Activated CD4-positive, alpha-beta memory T cell treated with anti-CD3 and anti-CD28 coated beads for 36 hours (primary cell): ENCODE measurements at regions of chr5 and their contacts with region 1.

Region 1: DNA sequence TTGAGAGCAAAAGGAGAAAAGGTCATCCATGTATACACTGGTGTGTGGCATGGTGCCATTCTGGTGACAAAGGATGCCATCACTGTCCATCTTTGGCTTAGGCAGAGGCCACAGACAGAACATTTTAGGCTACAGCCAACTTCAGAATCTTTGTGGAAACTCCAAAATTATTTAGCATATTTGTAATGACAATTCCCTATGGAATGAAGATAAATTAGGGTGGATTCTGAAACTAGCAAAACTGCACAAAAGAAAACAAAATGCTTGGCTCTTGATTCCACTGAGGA is 92.5 kb downstream of the FBXW11 start:
- DNase-seq: no peak
- H3K4me3 Mint-ChIP-seq: no peak overlapping the region
- H3K27ac Mint-ChIP-seq: peak overlapping the region; percentile 67
- H3K4me1 Mint-ChIP-seq: peaks cover 38% of the 10 kb centered on the region
- H3K27me3 Mint-ChIP-seq: no peaks in the 10 kb centered on the region

Region 2: DNA sequence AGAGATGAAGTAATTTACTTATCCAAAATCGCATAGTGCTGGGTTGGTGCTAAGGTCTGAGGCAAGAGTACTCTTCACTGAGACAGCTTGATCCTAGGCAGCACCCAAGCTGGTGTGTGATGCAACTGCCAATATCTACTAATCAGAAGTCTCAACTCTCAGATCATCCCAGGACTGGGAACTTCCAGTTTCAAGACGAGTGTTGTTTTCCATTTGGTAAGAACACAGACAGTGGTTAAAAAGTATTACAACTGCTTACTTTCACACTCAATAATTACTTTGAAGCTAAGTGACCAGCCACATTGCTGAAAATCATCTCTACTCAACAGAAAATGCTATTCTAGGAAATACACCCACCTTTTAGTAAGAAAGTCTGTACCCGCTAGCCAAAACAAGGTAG is 47.2 kb after region 1 on chr5:
- CTCF ChIA-PET with region 1: interaction called, 13 read pairs
- POLR2A ChIA-PET with region 1: no interaction called
- intact Hi-C with region 1: no loop called
- DNase-seq: peak; percentile 59
- H3K4me3 Mint-ChIP-seq: no peak overlapping the region
- H3K27ac Mint-ChIP-seq: peak overlapping the region; percentile 53
- H3K4me1 Mint-ChIP-seq: peaks cover 87% of the 10 kb centered on the region
- H3K27me3 Mint-ChIP-seq: no peaks in the 10 kb centered on the region

Region 3: DNA sequence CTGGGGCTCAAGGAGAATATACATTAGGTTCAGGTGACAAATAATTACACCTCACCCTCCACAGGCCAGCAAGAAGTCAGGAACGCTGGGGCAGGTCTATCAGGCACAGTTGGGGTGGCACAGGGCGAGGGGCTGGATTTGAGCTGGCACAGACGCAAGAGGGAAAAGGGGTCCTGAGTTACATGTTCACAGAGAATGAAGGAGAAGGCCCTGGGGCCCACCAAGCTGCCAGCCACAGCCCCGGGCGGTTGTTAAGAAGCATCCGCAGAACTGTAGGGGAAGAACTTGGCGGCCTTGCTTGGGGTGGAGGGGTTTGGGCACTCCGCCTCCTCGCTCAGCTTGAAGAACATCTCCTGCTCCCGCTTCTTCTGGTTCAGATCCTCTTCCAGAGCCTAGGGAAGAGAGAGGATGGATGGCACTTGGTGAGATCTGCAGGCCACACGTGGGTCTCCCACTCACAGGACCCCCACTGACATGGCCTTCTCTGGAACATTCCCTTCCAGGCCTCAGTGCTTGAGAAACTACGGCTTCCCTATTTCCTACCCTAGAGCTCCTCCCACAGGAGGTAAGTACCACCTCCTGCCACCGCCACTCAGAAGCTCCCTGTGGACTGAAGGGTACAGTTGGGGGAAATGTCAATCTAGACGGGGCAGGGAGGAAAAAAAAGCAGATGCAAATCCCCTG is 130.8 kb after region 1 on chr5:
- CTCF ChIA-PET with region 1: interaction called, 99 read pairs
- POLR2A ChIA-PET with region 1: no interaction called
- intact Hi-C with region 1: loop called (anchors 1 kb)
- DNase-seq: no peak
- H3K4me3 Mint-ChIP-seq: no peak overlapping the region
- H3K27ac Mint-ChIP-seq: no peak overlapping the region
- H3K4me1 Mint-ChIP-seq: peaks cover 27% of the 10 kb centered on the region
- H3K27me3 Mint-ChIP-seq: no peaks in the 10 kb centered on the region

Region 4: DNA sequence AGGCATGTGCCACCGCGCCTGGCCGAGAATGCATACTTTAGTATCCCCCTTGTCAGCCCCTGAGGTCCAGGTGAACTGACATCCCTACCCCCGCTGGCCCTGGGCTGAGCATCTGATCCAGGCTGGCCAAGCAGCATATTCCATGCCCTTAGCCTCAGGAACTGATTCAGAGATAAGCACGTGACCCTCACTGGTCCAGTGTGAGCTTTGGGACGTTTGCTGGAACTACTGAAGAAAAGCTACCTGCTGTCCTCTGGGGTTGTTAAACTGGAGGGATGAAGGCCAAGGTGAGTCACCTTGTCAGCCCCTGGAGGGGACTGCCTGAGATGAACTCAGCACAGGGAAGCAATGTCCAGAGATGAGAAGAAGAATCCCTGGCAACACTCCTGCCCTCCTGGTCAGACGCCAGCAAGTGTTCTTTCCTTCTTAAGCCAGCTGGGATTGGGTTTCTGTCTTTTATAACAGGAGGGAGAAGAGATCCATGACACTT is 151.6 kb after region 1 on chr5:
- CTCF ChIA-PET with region 1: interaction called, 39 read pairs
- POLR2A ChIA-PET with region 1: no interaction called
- intact Hi-C with region 1: no loop called
- DNase-seq: no peak
- H3K4me3 Mint-ChIP-seq: no peak overlapping the region
- H3K27ac Mint-ChIP-seq: no peak overlapping the region
- H3K4me1 Mint-ChIP-seq: peaks cover 50% of the 10 kb centered on the region
- H3K27me3 Mint-ChIP-seq: no peaks in the 10 kb centered on the region